ENCODE measurements at regions of chr12 and their contacts with region 1.

Region 1: GRCh38 chr12:56688129-56688845 is at the start of gene PTGES3:
- DNase-seq: peak; percentile 86 to 96 (median 93)
- H3K4me3 ChIP-seq: peak within 1 kb of the TSS; percentile 65 to 100 (median 96)
- H3K27ac ChIP-seq: peak within 1 kb of the TSS; percentile 97 to 100 (median 100)
- H3K27me3 ChIP-seq: no peaks in the 10 kb centered on the region
- CTCF ChIP-seq: peak in 17 of 56 donors; percentile 4 to 40 (median 16)
- total RNA-seq, gene PTGES3: 109 to 354 (median 170) TPM

Region 2: GRCh38 chr12:56630160-56630632 is 58.1 kb before region 1 on chr12 and contains the start of gene BAZ2A:
- intact Hi-C with region 1: loop called in 1 of 2 experiments (anchors 5 kb)
- DNase-seq: peak; percentile 89 to 98 (median 96)
- H3K4me3 ChIP-seq: peak within 1 kb of the TSS; percentile 57 to 100 (median 96)
- H3K27ac ChIP-seq: peak within 1 kb of the TSS; percentile 72 to 99 (median 94)
- H3K27me3 ChIP-seq: no peaks in the 10 kb centered on the region
- CTCF ChIP-seq: peak in 27 of 56 donors; percentile 4 to 45 (median 22)
- total RNA-seq, gene BAZ2A: 58.5 to 126 (median 86.8) TPM

Region 3: GRCh38 chr12:56636675-56637540 is 51.4 kb before region 1 on chr12:
- intact Hi-C with region 1: loop called (anchors 2 to 5 kb)
- DNase-seq: peak; percentile 83 to 98 (median 95)
- H3K4me3 ChIP-seq: peak overlapping the region; percentile 46 to 87 (median 78)
- H3K27ac ChIP-seq: peak overlapping the region; percentile 87 to 99 (median 95)
- H3K27me3 ChIP-seq: no peaks in the 10 kb centered on the region
- CTCF ChIP-seq: peak; percentile 32 to 90 (median 72)

Region 4: DNA sequence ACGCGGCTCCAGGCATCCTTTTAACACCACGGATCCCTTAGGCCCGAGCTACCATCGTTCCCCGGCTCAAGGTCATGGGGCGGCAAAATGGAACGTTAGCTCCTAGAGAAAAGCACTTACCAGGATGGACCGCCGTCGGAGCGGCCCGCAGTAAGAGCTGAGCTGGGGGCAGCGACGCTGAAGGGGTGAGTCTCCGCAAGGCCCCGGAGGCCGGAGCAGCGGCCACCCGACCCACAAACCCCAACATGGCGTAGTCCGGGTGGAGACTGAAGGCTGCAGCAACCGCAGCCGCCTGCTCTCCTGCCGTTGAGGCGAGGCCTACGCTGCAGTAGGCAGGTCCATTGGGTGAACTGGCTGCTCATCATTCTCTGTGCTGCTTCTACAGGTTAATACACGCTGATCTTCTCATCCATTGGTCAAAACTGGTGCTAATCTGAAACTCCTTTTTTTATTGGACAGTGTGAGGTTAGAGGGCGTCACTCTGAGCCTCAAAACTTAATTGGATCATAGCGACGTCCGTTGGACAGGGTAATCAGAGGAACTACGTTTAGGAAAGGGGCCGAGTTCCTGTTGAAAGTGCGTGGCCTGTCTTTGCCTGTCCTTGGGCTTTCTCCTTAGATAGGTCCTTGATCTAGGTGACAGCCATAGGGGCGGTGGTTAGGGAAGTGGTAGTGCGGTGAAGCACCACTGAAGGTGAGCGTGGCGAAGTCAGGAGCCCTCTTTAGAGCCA is 42.4 kb before region 1 on chr12 and contains the start of gene ATP5F1B:
- intact Hi-C with region 1: loop called (anchors 2 to 5 kb)
- DNase-seq: peak; percentile 82 to 99 (median 96)
- H3K4me3 ChIP-seq: peak within 1 kb of the TSS; percentile 76 to 100 (median 97)
- H3K27ac ChIP-seq: peak within 1 kb of the TSS; percentile 66 to 99 (median 95)
- H3K27me3 ChIP-seq: no peaks in the 10 kb centered on the region
- CTCF ChIP-seq: peak in 33 of 56 donors; percentile 3 to 53 (median 22)
- total RNA-seq, gene ATP5F1B: 248 to 863 (median 546) TPM

Measured in dorsolateral prefrontal cortex (tissue), 120 donors.